Activated T-helper 2 cell treated with anti-CD3 and anti-CD28 coated beads, Interferon-gamma antibody, Interleukin-2, Interleukin-4, amounts not matched to agents 10 μg/mL and 5 μg/mL and 100 μg/mL, durations not matched to agents 14 hours and 24 hours and 36 hours (primary cell): ENCODE measurements at regions of chr2 and their contacts with region 1.

Region 1: DNA sequence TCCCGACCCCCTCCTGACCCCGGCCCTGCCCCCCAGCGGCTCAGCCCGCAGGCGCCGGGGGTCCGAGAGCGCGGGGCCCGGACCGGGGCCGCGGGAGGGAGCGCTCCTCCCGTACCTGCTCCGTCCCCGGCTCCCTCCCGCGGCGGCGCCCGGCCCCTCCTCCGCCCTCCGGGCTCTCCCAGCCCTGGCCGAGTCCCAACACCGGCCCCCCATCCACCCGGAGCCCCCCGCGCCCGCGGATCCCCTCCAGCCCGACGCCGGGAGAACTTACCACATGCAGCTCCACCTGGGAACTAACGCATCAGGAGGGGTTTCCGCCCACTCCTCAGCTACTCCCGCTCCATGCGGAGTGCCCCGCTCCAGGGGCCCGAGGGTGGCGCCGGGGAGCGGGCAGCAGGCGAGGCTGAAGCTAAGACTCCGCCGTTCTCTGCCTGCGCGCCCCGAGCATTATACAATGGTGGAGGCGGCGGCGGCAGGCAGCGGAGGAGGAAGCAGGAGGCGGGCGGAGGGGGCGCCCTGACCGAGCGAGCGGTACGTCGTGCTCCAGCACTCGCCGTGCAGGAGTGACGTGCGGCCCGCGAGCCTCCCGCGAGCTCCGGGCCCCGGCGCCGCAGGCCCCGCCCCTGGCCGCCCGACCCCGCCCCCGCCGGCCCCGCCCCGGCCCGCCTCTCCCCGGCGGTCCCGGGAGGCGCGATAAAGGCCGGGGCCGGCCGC is at the start of gene SERTAD2:
- DNase-seq: peak; percentile 82
- H3K4me3 Mint-ChIP-seq: peak within 1 kb of the TSS; percentile 91
- H3K27ac Mint-ChIP-seq: peak within 1 kb of the TSS; percentile 90
- H3K4me1 Mint-ChIP-seq: peaks cover 63% of the 10 kb centered on the region
- H3K27me3 Mint-ChIP-seq: no peaks in the 10 kb centered on the region
- total RNA-seq, gene SERTAD2: 29.2 and 31.0 TPM in 2 replicates

Region 2: DNA sequence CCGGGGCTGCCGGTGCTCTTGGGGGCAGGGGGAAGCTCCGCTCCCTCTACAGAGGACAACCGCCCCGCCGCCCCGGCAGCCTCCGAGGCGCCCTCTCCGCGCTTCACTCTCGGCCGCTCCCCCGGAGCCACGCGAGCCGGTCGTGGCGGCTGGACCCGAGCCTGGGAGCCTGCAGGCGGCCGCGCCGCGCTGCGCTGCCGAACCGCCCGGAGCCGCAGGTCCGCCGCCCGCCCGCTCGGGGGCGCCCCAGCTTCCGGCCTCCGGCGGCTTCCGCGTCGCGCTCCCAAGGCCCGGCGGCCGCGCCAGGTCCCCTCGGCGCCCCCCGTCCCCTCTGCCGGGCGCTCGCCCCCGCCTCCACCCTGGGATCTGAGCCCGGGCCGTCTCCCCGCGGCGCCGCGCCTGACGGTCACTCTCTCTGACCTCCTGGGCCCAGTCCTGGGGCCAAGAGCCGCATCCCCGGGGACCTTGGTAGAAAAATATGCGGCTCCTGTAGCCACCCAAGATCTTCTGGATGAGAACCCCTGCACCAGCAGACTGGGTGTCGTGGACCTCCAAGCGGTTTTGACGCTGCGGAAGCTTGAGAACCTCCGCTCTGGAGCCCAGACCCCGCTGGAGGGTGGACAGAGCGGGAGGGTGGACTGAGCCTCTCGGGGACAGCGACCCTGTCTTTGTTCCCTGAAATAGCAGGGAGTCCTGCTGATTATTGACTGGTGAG is 44.1 kb before region 1 on chr2:
- intact Hi-C with region 1: loop called (anchors 2 kb)
- DNase-seq: peak; percentile 69
- H3K4me3 Mint-ChIP-seq: peak overlapping the region; percentile 66
- H3K27ac Mint-ChIP-seq: peak overlapping the region; percentile 42
- H3K4me1 Mint-ChIP-seq: peaks cover 24% of the 10 kb centered on the region
- H3K27me3 Mint-ChIP-seq: peaks cover 21% of the 10 kb centered on the region

Region 3: GRCh38 chr2:64679673-64680425 is 26.3 kb after region 1 on chr2:
- intact Hi-C with region 1: loop called (anchors 1 kb)
- DNase-seq: no peak
- H3K4me3 Mint-ChIP-seq: peak overlapping the region; percentile 61
- H3K27ac Mint-ChIP-seq: peak overlapping the region; percentile 93
- H3K4me1 Mint-ChIP-seq: peaks cover 59% of the 10 kb centered on the region
- H3K27me3 Mint-ChIP-seq: no peaks in the 10 kb centered on the region

Region 4: GRCh38 chr2:64737547-64737946 is 84.0 kb after region 1 on chr2:
- intact Hi-C with region 1: loop called (anchors 1 kb)
- DNase-seq: no peak
- H3K4me3 Mint-ChIP-seq: peak overlapping the region; percentile 28
- H3K27ac Mint-ChIP-seq: peak overlapping the region; percentile 79
- H3K4me1 Mint-ChIP-seq: peaks cover 45% of the 10 kb centered on the region
- H3K27me3 Mint-ChIP-seq: no peaks in the 10 kb centered on the region

Region 5: GRCh38 chr2:64819774-64820696 is 166.5 kb after region 1 on chr2:
- intact Hi-C with region 1: loop called (anchors 5 kb)
- DNase-seq: peak; percentile 30
- H3K4me3 Mint-ChIP-seq: peak overlapping the region; percentile 59
- H3K27ac Mint-ChIP-seq: peak overlapping the region; percentile 91
- H3K4me1 Mint-ChIP-seq: peaks cover 31% of the 10 kb centered on the region
- H3K27me3 Mint-ChIP-seq: no peaks in the 10 kb centered on the region

Region 6: GRCh38 chr2:64831134-64831976 is 177.8 kb after region 1 on chr2:
- intact Hi-C with region 1: loop called (anchors 1 kb)
- DNase-seq: peak; percentile 69
- H3K4me3 Mint-ChIP-seq: peak overlapping the region; percentile 15
- H3K27ac Mint-ChIP-seq: peak overlapping the region; percentile 81
- H3K4me1 Mint-ChIP-seq: peaks cover 24% of the 10 kb centered on the region
- H3K27me3 Mint-ChIP-seq: peaks cover 8% of the 10 kb centered on the region